GM12878 (cell line): ENCODE measurements at regions of chr12 and their contacts with region 1.

Region 1: DNA sequence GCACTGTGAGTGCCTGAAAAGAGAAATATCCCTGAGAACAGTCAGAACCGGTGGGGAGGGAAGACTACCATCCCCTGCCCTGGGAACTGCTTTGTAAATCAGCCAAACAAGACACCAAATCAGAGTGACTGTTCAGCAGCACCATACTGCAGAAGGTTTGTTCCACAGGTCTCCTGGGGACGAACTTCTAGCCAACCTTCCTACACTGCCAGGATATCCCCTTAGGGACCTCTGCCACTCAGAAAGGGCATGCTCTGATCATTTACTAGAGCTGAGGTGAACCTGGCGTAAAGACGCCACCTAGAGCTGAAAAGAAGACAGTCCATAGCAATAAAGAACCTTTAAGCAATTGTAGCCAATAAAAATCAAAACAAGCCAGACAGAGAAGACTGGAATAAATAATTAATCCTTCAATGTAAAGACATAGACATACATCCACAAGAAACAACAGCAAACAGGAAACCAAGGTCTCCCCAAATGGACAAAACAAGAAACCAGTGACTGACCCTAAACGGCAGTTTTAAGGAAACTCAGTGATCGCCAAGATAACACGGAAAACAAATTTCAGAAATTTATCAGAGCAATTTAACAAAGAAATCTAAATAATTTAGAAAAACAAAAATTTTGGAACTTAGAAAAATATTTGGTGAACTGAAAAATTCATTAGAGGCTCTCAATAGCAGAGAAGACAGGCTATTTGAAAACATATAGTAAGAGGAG is 228.1 kb upstream of the AMIGO2 start:
- DNase-seq: peak; percentile 31
- ATAC-seq: peak; percentile 96
- H3K4me3 ChIP-seq: no peak overlapping the region
- H3K27ac ChIP-seq: no peak overlapping the region
- H3K4me1 ChIP-seq: peaks cover 3% of the 10 kb centered on the region; the same call in 1 of the 2 replicates
- H3K27me3 ChIP-seq: no peaks in the 10 kb centered on the region
- CTCF ChIP-seq: peak; percentile 60 to 77 (median 67)
- EP300 ChIP-seq: no peak
- POLR2A ChIP-seq: no peak
- RAD21 ChIP-seq: peak; percentile 78

Region 2: DNA sequence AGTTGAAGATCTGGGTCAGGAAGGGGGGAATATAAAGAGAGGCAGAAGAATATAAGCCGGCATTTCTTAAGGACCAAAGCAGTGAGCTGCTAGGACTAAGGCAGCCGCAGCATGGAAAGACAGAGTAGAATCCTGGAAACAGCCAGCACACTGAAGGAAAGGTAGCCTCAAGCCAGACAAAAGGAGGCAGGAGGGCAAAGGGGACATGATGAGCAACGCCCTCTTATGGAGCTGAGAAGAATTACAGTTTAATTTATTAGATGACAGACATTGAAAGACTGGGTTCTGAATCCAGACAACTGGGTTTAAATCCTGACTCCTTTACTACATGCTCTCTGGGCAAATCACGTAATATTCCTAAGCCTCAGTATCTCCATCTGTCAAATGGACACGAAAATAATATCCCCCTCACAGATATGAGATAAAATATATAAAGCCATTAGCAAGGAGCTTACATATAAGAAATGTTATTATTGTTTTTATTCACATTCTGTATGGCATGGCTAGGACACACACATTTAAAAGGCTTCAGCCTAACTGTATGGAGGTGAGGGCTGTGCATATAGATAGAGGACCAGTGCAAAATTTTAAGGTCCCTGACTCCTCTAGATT is 236.5 kb before region 1 on chr12:
- CTCF ChIA-PET with region 1: interaction called, 14 read pairs
- POLR2A ChIA-PET with region 1: no interaction called
- RAD21 ChIA-PET with region 1: interaction called, 9 read pairs
- SMC1A ChIA-PET with region 1: interaction called, 4 read pairs
- in situ Hi-C with region 1: no loop called
- intact Hi-C with region 1: no loop called
- DNase-seq: no peak
- ATAC-seq: no peak
- H3K4me3 ChIP-seq: no peak overlapping the region
- H3K27ac ChIP-seq: no peak overlapping the region
- H3K4me1 ChIP-seq: no peaks in the 10 kb centered on the region
- H3K27me3 ChIP-seq: no peaks in the 10 kb centered on the region; a peak in 1 of 4 replicates
- CTCF ChIP-seq: peak; percentile 43 to 45 (median 44); a peak in 5 of 6 replicates
- EP300 ChIP-seq: no peak
- POLR2A ChIP-seq: no peak
- RAD21 ChIP-seq: peak; percentile 22; the same call in 1 of the 2 replicates

Region 3: GRCh38 chr12:47079468-47079980 is 228.3 kb before region 1 on chr12 and contains the starts of genes AMIGO2 and PCED1B:
- CTCF ChIA-PET with region 1: interaction called, 12 read pairs
- POLR2A ChIA-PET with region 1: no interaction called
- RAD21 ChIA-PET with region 1: interaction called, 9 read pairs
- SMC1A ChIA-PET with region 1: interaction called, 9 read pairs
- in situ Hi-C with region 1: no loop called
- intact Hi-C with region 1: loop called (anchors 2 kb)
- DNase-seq: no peak
- ATAC-seq: peak; percentile 82
- H3K4me3 ChIP-seq: peak within 1 kb of the TSS; percentile 42
- H3K27ac ChIP-seq: no peak within 1 kb of the TSS
- H3K4me1 ChIP-seq: peaks cover 10% of the 10 kb centered on the region
- H3K27me3 ChIP-seq: peaks cover 12 to 19% of the 10 kb centered on the region in 2 experiments
- CTCF ChIP-seq: peak; percentile 18 to 48 (median 25); a peak in 3 of 6 replicates
- EP300 ChIP-seq: no peak
- POLR2A ChIP-seq: no peak
- RAD21 ChIP-seq: peak; percentile 49
- polyA plus RNA-seq, gene AMIGO2: not detected
- polyA plus RNA-seq, gene PCED1B: 0.80 to 1.8 TPM

Region 4: DNA sequence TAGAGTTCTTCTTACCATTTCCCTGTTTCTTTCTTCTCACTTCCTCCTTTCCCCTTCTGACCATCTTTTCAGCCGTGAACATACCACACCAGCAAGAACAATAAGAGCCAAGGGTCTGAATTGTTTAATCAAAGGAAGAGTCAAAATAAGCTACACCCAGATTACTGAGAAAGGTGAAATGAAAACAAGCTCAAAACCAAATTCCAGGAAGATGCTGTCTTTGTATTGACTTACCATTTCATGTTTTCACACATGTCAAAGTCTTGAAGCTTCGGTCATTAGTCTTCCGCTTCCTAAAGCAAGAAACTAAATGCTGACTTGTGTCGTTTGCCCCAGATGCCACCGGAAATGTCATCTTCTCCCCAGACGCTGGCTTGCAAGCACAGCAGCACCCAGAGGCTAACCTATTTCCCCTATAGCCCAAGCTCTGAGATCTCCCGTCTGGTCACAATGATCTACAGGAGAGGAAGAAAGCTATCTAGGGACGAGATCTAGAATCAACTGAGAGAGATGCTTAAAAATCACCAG is 91.6 kb before region 1 on chr12:
- CTCF ChIA-PET with region 1: interaction called, 3 read pairs
- POLR2A ChIA-PET with region 1: interaction called, 5 read pairs
- RAD21 ChIA-PET with region 1: interaction called, 5 read pairs
- SMC1A ChIA-PET with region 1: interaction called, 3 read pairs
- in situ Hi-C with region 1: no loop called
- intact Hi-C with region 1: loop called (anchors 5 kb)
- DNase-seq: peak; percentile 74
- ATAC-seq: peak; percentile 78
- H3K4me3 ChIP-seq: peak overlapping the region; percentile 60; the same call in 1 of the 2 replicates
- H3K27ac ChIP-seq: peak overlapping the region; percentile 75
- H3K4me1 ChIP-seq: peaks cover 25% of the 10 kb centered on the region
- H3K27me3 ChIP-seq: no peaks in the 10 kb centered on the region
- CTCF ChIP-seq: no peak
- EP300 ChIP-seq: no peak
- POLR2A ChIP-seq: 0 out of 2 replicates have a peak, but pooled peaks have one; percentile 37
- RAD21 ChIP-seq: no peak

Region 5: DNA sequence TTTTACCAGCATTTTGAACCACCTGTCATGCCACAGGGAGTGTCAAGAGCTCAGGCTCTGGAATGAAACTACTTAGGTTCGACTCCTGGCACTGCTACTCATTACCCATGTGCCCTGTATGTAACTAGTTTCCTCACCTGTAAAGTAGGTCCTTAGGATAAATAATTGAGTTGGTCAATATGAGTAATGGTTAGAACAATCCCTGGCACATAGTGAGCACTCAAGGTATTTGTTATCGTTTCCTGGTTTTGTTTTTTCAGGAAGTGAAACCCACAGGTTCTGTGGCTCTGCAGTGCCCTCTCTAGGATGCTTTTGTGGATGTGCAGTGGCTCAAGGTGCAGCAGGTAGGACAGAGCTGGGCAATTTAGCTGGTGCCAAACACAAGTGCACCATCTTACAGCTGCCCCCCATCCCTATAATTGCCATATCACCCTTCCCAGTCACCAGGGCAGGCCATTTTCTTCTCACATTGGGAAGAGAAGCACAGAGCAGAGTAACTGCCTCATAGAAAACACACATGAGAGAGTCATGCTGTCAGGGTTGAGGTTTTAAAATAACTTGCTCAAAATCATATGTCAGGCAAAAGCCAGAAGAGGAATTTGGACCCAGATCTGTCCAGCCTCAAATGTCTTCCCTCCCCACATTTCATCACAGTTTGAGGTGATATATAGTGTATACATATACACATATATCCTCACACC is 100.5 kb after region 1 on chr12:
- CTCF ChIA-PET with region 1: interaction called, 3 read pairs
- POLR2A ChIA-PET with region 1: no interaction called
- RAD21 ChIA-PET with region 1: interaction called, 5 read pairs
- SMC1A ChIA-PET with region 1: interaction called, 3 read pairs
- in situ Hi-C with region 1: no loop called
- intact Hi-C with region 1: loop called (anchors 5 kb)
- DNase-seq: peak; percentile 40
- ATAC-seq: peak; percentile 97
- H3K4me3 ChIP-seq: no peak overlapping the region
- H3K27ac ChIP-seq: no peak overlapping the region
- H3K4me1 ChIP-seq: no peaks in the 10 kb centered on the region
- H3K27me3 ChIP-seq: no peaks in the 10 kb centered on the region; a peak in 1 of 4 replicates
- CTCF ChIP-seq: peak; percentile 49 to 66 (median 52)
- EP300 ChIP-seq: peak in 1 of 2 experiments; percentile 49; a peak in 1 of 4 replicates
- POLR2A ChIP-seq: no peak
- RAD21 ChIP-seq: peak; percentile 72